Activated CD4-positive, alpha-beta T cell treated with anti-CD3 and anti-CD28 coated beads for 36 hours (primary cell): ENCODE measurements at regions of chr9 and their contacts with region 1.

Region 1: DNA sequence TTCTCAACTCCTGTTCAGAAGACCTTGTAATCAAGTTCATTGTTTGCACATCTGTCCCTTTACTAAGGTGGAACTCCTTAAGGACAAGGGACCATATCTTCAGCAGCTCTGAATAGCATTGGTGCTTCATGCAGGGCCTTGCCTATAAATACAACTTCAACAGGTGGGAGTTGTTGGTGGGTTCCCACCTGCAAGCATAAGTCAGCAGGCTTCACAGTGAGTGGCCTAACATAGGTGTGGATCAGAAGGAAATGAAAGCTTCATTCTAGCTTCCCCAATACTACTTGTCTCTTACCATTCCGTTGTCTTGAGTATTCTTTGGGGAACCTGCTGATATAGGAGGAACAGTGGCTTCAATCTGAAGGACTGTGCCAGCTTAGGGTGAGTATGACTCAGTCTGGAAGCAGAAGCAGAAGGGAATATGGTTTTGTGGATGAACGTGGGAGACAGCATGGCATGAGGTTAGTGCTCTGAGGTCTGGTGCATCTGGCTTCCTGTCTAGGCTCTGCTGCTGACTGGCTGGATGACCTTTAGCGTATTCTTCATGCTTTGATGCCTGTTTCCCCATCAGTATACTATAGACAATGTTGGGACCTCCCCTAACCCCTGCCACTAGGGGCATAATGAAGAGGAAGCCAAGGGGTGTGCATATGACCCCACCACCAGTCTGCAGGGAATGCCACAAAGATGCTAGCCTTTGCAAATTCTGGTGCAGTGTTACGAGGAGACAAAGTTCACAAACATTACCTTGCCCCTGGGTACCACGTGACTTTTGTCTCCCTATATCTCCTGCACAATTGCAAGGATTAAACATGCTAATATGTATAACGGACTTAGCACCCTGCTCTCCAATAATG is 192.3 kb downstream of the PALM2AKAP2 start:
- DNase-seq: peak; percentile 47
- ATAC-seq: peak; percentile 33
- H3K4me3 Mint-ChIP-seq: no peak overlapping the region
- H3K27ac Mint-ChIP-seq: peak overlapping the region; percentile 75
- H3K4me1 Mint-ChIP-seq: peaks cover 90% of the 10 kb centered on the region
- H3K27me3 Mint-ChIP-seq: no peaks in the 10 kb centered on the region

Region 2: DNA sequence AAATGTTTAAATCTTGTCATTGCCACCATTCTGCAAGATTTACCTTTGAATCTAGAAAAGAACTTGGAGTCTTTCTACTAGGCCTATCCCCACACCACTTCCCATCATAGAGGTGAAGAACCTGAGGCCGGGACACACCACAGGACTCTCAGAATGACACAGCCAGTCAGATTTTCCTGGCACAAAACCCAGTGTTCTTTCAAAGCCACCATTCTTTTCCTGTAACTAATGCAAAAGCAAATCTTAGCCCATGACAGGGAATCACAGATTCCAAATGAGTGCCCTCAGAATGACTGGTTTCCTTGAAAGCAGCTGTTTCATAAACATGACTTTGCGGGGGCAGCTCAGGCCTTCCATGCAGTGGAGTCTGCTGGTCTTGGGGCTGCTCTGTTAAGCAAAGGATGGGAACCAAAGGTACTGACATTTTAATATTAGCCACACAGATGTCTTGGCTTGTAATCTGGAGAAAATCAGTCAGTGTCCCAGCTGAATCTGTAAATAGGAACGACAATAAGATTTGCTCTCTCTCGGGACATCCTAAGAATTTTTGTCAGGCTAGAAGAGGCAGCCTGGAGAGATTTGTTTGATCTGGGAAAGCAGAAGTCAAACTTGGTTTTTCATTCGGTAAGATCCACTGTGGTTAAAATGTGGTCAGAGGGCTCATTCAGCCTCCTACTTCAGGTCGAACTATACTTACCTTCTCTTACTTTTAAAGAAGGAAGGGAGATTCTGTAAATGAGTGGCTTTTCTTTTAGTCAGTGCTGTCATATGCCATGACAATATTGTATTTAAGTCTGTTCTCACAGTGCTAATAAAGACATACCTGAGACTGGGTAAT is 77.1 kb before region 1 on chr9:
- CTCF ChIA-PET with region 1: no interaction called
- POLR2A ChIA-PET with region 1: no interaction called
- intact Hi-C with region 1: loop called (anchors 1 to 2 kb)
- DNase-seq: peak; percentile 80
- ATAC-seq: peak; percentile 75
- H3K4me3 Mint-ChIP-seq: peak overlapping the region; percentile 36
- H3K27ac Mint-ChIP-seq: peak overlapping the region; percentile 87
- H3K4me1 Mint-ChIP-seq: peaks cover 30% of the 10 kb centered on the region
- H3K27me3 Mint-ChIP-seq: peaks cover 6% of the 10 kb centered on the region

Region 3: DNA sequence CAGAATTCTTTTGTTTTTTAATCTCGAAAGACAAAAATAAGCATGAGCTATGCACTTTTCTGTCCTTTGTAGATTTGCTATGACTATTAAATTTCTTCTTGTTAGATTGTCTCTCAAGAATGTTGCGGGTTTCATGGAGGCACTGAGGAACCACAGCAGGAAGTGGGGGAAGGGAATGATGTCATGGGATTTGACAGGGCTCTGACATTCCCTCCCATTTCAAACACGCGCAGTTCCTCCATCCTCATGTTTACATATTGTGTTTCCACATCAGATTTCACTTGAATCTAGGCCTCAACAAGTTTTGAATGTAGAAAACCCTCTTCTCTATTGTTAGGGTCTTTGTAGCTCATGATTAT is 37.4 kb before region 1 on chr9:
- CTCF ChIA-PET with region 1: interaction called, 7 read pairs
- POLR2A ChIA-PET with region 1: interaction called, 7 read pairs
- intact Hi-C with region 1: loop called (anchors 1 to 2 kb)
- DNase-seq: peak; percentile 30
- ATAC-seq: no peak
- H3K4me3 Mint-ChIP-seq: no peak overlapping the region
- H3K27ac Mint-ChIP-seq: peak overlapping the region; percentile 80
- H3K4me1 Mint-ChIP-seq: peaks cover 45% of the 10 kb centered on the region
- H3K27me3 Mint-ChIP-seq: peaks cover 3% of the 10 kb centered on the region

Region 4: DNA sequence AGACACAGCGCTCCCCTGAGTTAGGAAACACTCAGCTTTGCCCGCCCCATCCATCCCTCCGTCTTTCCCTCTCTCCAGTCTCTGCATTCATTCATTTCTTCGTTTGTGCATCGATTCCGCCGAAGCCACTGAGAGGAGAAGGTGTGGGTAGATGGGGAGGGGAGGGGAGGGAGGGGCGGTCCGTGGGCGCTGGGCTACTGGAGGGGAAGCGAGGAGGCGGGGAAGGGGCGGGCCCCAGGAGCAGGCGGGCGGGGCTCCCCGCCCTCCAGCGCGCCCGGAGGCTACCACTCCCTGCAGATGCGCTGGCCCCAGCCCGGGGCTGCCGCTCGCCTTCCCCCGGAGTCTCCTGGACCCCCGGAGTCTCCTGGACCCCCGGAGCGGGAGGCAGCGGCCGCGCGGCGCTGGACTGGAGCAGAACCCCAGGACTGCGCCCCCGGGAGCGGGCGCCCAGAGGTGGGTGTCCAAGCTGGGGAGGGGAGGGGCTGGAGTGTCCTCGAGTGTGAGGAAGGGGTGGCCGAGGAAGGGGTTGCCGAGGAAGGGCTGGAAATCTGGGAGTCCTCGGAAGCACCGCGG is 76.2 kb after region 1 on chr9:
- CTCF ChIA-PET with region 1: interaction called, 3 read pairs
- POLR2A ChIA-PET with region 1: interaction called, 8 read pairs
- intact Hi-C with region 1: loop called (anchors 1 to 2 kb)
- DNase-seq: peak; percentile 93
- ATAC-seq: peak; percentile 89
- H3K4me3 Mint-ChIP-seq: peak overlapping the region; percentile 87
- H3K27ac Mint-ChIP-seq: peak overlapping the region; percentile 75
- H3K4me1 Mint-ChIP-seq: peaks cover 36% of the 10 kb centered on the region
- H3K27me3 Mint-ChIP-seq: peaks cover 10% of the 10 kb centered on the region

Region 5: DNA sequence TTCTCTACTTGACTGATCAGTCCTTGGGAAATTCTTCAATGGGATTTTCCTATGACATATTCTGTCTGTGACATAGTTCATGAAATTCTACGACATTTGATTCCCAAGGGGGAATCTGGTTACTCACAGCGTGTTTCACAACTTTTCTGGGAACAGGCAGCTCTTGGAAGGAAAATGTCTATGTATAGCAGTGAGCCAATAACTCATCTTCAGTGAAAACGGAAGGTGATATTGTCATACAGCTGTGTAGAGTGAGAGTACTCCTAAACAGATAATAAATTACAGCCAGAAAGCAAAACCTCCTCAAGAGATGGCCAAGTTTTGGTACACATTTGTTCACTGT is 144.3 kb after region 1 on chr9:
- CTCF ChIA-PET with region 1: no interaction called
- POLR2A ChIA-PET with region 1: no interaction called
- intact Hi-C with region 1: no loop called
- DNase-seq: no peak
- ATAC-seq: no peak
- H3K4me3 Mint-ChIP-seq: no peak overlapping the region
- H3K27ac Mint-ChIP-seq: no peak overlapping the region
- H3K4me1 Mint-ChIP-seq: no peaks in the 10 kb centered on the region
- H3K27me3 Mint-ChIP-seq: no peaks in the 10 kb centered on the region